Endothelial cell of umbilical vein (primary cell): ENCODE measurements at regions of chrX and their contacts with region 1.

Region 1: GRCh38 chrX:152941328-152942106 is 43.6 kb downstream of the ZNF185 start:
- DNase-seq: peak; percentile 91
- H3K4me3 ChIP-seq: peak overlapping the region; percentile 28 to 74 (median 62)
- H3K27ac ChIP-seq: peak overlapping the region; percentile 46
- H3K4me1 ChIP-seq: peaks cover 13% of the 10 kb centered on the region
- H3K27me3 ChIP-seq: no peaks in the 10 kb centered on the region
- CTCF ChIP-seq: peak; percentile 64 to 81
- POLR2A ChIP-seq: peak; percentile 75

Region 2: GRCh38 chrX:152810403-152810802 is 131.1 kb before region 1 on chrX:
- CTCF ChIA-PET with region 1: no interaction called
- POLR2A ChIA-PET with region 1: no interaction called
- dilution Hi-C with region 1: no loop called
- intact Hi-C with region 1: no loop called
- DNase-seq: no peak
- H3K4me3 ChIP-seq: no peak overlapping the region
- H3K27ac ChIP-seq: no peak overlapping the region
- H3K4me1 ChIP-seq: no peaks in the 10 kb centered on the region
- H3K27me3 ChIP-seq: peaks cover 0 to 2% of the 10 kb centered on the region in 2 experiments
- CTCF ChIP-seq: no peak
- POLR2A ChIP-seq: no peak

Region 3: GRCh38 chrX:152958524-152959465 is 17.3 kb after region 1 on chrX:
- CTCF ChIA-PET with region 1: interaction called, 12 read pairs
- POLR2A ChIA-PET with region 1: no interaction called
- dilution Hi-C with region 1: no loop called
- intact Hi-C with region 1: no loop called
- DNase-seq: peak; percentile 89
- H3K4me3 ChIP-seq: peak overlapping the region in 1 of 3 experiments; percentile 9
- H3K27ac ChIP-seq: peak overlapping the region; percentile 9
- H3K4me1 ChIP-seq: no peaks in the 10 kb centered on the region
- H3K27me3 ChIP-seq: no peaks in the 10 kb centered on the region
- CTCF ChIP-seq: peak; percentile 70 to 71
- POLR2A ChIP-seq: peak; percentile 60

Region 4: DNA sequence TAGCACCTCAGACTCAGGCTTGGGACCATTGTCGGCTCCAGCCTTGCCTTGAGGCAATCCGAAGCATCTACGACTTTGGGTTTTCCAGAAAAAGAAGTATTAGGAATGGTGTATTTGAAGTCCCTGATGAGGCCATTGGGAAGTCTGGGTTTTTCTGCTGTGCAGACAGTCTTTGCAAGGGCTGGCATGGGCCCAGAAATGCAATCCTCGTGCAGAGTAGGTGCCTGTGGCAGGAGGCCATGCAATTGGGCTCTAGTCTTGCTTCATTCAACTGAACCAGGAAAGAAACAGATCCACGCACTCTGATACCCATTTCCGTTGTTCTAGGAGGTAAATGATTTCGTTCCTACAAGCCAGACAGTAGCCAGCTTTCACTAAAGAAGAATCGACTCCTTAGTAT is 482.1 kb after region 1 on chrX:
- CTCF ChIA-PET with region 1: no interaction called
- POLR2A ChIA-PET with region 1: no interaction called
- dilution Hi-C with region 1: no loop called
- intact Hi-C with region 1: no loop called
- DNase-seq: no peak
- H3K4me3 ChIP-seq: no peak overlapping the region
- H3K27ac ChIP-seq: no peak overlapping the region
- H3K4me1 ChIP-seq: no peaks in the 10 kb centered on the region
- H3K27me3 ChIP-seq: no peaks in the 10 kb centered on the region
- CTCF ChIP-seq: no peak
- POLR2A ChIP-seq: no peak